HepG2 (cell line): ENCODE measurements at regions of chr2 and their contacts with region 1.

Region 1: GRCh38 chr2:75523313-75524275 is 37.1 kb downstream of the EVA1A start:
- DNase-seq: peak; percentile 100
- ATAC-seq: peak; percentile 78
- H3K4me3 ChIP-seq: peak overlapping the region; percentile 24 to 59 (median 51); a peak in 5 of 6 replicates
- H3K27ac ChIP-seq: peak overlapping the region; percentile 92
- H3K4me1 ChIP-seq: peaks cover 100% of the 10 kb centered on the region
- H3K27me3 ChIP-seq: no peaks in the 10 kb centered on the region
- CTCF ChIP-seq: no peak
- EP300 ChIP-seq: peak; percentile 95 to 98; a peak in 3 of 4 replicates
- POLR2A ChIP-seq: peak in 1 of 2 experiments; percentile 43; a peak in 2 of 4 replicates
- RAD21 ChIP-seq: no peak

Region 2: GRCh38 chr2:74777161-74777900 is 746.3 kb before region 1 on chr2:
- CTCF ChIA-PET with region 1: no interaction called
- POLR2A ChIA-PET with region 1: no interaction called
- in situ Hi-C with region 1: no loop called
- intact Hi-C with region 1: no loop called
- DNase-seq: no peak
- ATAC-seq: peak; percentile 23; the same call in 2 of the 3 replicates
- H3K4me3 ChIP-seq: peak overlapping the region; percentile 14 to 67 (median 44); a peak in 4 of 6 replicates
- H3K27ac ChIP-seq: no peak overlapping the region
- H3K4me1 ChIP-seq: peaks cover 47% of the 10 kb centered on the region
- H3K27me3 ChIP-seq: peaks cover 0 to 21% of the 10 kb centered on the region in 2 experiments; a peak in 2 of 5 replicates
- CTCF ChIP-seq: no peak
- EP300 ChIP-seq: no peak
- POLR2A ChIP-seq: no peak
- RAD21 ChIP-seq: no peak

Region 3: GRCh38 chr2:75480971-75481836 is 42.4 kb before region 1 on chr2:
- CTCF ChIA-PET with region 1: no interaction called
- POLR2A ChIA-PET with region 1: interaction called, 36 read pairs
- in situ Hi-C with region 1: no loop called
- intact Hi-C with region 1: loop called (anchors 1 kb)
- DNase-seq: peak; percentile 88
- ATAC-seq: peak; percentile 95
- H3K4me3 ChIP-seq: peak overlapping the region in 1 of 3 experiments; percentile 29; a peak in 1 of 6 replicates
- H3K27ac ChIP-seq: peak overlapping the region; percentile 69
- H3K4me1 ChIP-seq: peaks cover 52% of the 10 kb centered on the region
- H3K27me3 ChIP-seq: no peaks in the 10 kb centered on the region
- CTCF ChIP-seq: peak; percentile 76
- EP300 ChIP-seq: peak in 1 of 2 experiments; percentile 98; a peak in 2 of 4 replicates
- POLR2A ChIP-seq: 0 out of 4 replicates have a peak, but pooled peaks of 1 of the 2 experiments have one; percentile 12
- RAD21 ChIP-seq: 0 out of 2 replicates have a peak, but pooled peaks have one; percentile 16

Region 4: GRCh38 chr2:75548036-75548573 is 24.5 kb after region 1 on chr2:
- CTCF ChIA-PET with region 1: no interaction called
- POLR2A ChIA-PET with region 1: interaction called, 73 read pairs
- in situ Hi-C with region 1: no loop called
- intact Hi-C with region 1: no loop called
- DNase-seq: no peak
- ATAC-seq: no peak
- H3K4me3 ChIP-seq: no peak overlapping the region
- H3K27ac ChIP-seq: no peak overlapping the region
- H3K4me1 ChIP-seq: peaks cover 97% of the 10 kb centered on the region
- H3K27me3 ChIP-seq: no peaks in the 10 kb centered on the region
- CTCF ChIP-seq: no peak
- EP300 ChIP-seq: no peak
- POLR2A ChIP-seq: 0 out of 4 replicates have a peak, but pooled peaks of 1 of the 2 experiments have one; percentile 6
- RAD21 ChIP-seq: no peak

Region 5: GRCh38 chr2:75560768-75561565 is 37.4 kb after region 1 on chr2 and contains the start of gene EVA1A:
- CTCF ChIA-PET with region 1: no interaction called
- POLR2A ChIA-PET with region 1: interaction called, 118 read pairs
- in situ Hi-C with region 1: no loop called
- intact Hi-C with region 1: loop called (anchors 2 kb)
- DNase-seq: peak; percentile 73
- ATAC-seq: peak; percentile 82
- H3K4me3 ChIP-seq: peak within 1 kb of the TSS; percentile 84 to 93 (median 91)
- H3K27ac ChIP-seq: peak within 1 kb of the TSS; percentile 78
- H3K4me1 ChIP-seq: peaks cover 83% of the 10 kb centered on the region
- H3K27me3 ChIP-seq: no peaks in the 10 kb centered on the region; a peak in 1 of 5 replicates
- CTCF ChIP-seq: no peak; the same call in 1 of the 2 replicates
- EP300 ChIP-seq: no peak; a peak in 1 of 4 replicates
- POLR2A ChIP-seq: peak in 1 of 2 experiments; percentile 85; a peak in 3 of 4 replicates
- RAD21 ChIP-seq: peak; percentile 33
- total RNA-seq, gene EVA1A: 55.9 and 57.8 TPM in 2 replicates

Region 6: GRCh38 chr2:75608684-75609333 is 85.2 kb after region 1 on chr2:
- CTCF ChIA-PET with region 1: no interaction called
- POLR2A ChIA-PET with region 1: interaction called, 18 read pairs
- in situ Hi-C with region 1: no loop called
- intact Hi-C with region 1: loop called (anchors 2 kb)
- DNase-seq: peak; percentile 79
- ATAC-seq: peak; percentile 95
- H3K4me3 ChIP-seq: peak overlapping the region; percentile 28 to 65 (median 28); a peak in 5 of 6 replicates
- H3K27ac ChIP-seq: peak overlapping the region; percentile 8
- H3K4me1 ChIP-seq: peaks cover 66% of the 10 kb centered on the region
- H3K27me3 ChIP-seq: no peaks in the 10 kb centered on the region; a peak in 1 of 5 replicates
- CTCF ChIP-seq: peak; percentile 99
- EP300 ChIP-seq: peak in 1 of 2 experiments; percentile 33; a peak in 1 of 4 replicates
- POLR2A ChIP-seq: no peak
- RAD21 ChIP-seq: peak; percentile 99

Region 7: DNA sequence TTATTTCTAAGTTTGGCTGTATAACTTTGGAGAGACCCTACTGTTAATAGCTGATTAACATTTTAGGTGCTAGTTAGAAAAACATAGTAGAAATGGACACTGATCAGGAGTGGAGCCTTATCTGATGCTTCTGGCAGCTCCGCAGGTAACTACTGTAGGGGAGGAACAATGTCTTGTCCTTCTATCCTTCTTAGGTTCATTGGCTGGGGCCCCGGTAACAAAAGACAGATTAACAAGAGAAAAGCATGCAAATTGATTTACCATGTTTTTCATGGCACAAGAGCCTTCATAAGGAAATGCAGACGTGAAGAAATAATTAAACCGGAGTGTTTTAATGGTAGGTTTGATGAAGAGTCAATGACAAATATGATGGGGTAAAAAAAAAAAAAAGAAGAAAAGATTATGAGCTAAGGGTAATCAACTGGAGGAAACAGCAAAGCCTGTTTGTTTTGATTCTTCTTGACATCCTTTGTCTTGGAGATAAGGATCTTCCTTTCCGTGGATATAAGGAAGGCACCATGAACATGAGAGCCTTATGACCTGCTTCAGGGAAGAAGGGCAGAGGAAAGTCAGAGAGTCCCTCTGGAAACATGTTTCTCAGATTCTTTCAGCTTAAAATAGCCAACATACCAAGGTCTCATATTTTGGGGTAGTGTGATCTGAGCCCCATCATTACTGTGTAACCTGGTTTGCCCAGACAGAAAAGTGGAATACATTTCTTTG is 249.5 kb after region 1 on chr2:
- CTCF ChIA-PET with region 1: no interaction called
- POLR2A ChIA-PET with region 1: no interaction called
- in situ Hi-C with region 1: no loop called
- intact Hi-C with region 1: no loop called
- DNase-seq: no peak
- ATAC-seq: no peak
- H3K4me3 ChIP-seq: no peak overlapping the region
- H3K27ac ChIP-seq: no peak overlapping the region
- H3K4me1 ChIP-seq: no peaks in the 10 kb centered on the region
- H3K27me3 ChIP-seq: no peaks in the 10 kb centered on the region
- CTCF ChIP-seq: no peak
- EP300 ChIP-seq: no peak
- POLR2A ChIP-seq: no peak
- RAD21 ChIP-seq: no peak

Region 8: DNA sequence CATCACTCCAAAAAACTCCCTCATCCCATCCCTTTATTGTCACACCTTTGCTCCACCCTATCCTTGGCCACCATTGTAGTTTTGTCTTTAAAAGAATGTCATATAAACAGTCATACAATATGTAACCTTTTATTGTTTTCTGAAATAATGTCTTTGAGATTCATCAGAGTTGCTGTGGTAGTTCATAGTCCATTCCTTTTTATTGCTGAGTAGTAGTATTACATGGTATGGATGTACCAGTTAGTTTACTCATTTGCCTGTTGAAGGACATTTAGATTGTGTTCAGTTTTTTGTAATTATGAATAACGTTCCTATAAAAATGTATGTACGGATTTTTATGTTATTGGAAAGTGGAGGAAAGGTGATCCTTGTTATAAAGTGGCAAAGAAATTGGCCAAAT is 358.9 kb after region 1 on chr2:
- CTCF ChIA-PET with region 1: no interaction called
- POLR2A ChIA-PET with region 1: no interaction called
- in situ Hi-C with region 1: no loop called
- intact Hi-C with region 1: no loop called
- DNase-seq: no peak
- ATAC-seq: no peak
- H3K4me3 ChIP-seq: no peak overlapping the region
- H3K27ac ChIP-seq: no peak overlapping the region
- H3K4me1 ChIP-seq: no peaks in the 10 kb centered on the region
- H3K27me3 ChIP-seq: no peaks in the 10 kb centered on the region
- CTCF ChIP-seq: no peak
- EP300 ChIP-seq: no peak
- POLR2A ChIP-seq: no peak
- RAD21 ChIP-seq: no peak